Psoas muscle (tissue), 8 donors: ENCODE measurements at regions of chr2 and their contacts with region 1.

Region 1: DNA sequence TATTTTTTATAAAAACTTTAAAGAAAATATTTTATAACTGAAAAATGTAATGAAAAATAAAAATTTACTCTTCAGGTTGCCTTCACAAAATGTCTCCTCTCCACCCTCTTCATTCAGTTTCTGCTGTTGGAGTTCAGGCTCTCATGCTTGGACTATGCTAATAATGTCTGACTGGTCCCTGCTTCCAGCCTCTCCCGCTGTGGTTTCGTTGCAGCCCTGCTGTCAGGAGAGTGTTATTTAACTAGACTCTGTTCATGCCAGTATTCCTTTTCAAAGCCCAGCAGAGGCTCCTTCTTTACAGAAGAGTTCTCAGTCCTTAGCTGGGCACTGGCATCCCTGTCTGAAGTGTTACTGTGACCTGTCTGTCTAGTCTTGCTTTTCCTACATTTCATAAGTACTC is 40.4 kb downstream of the CLIP4 start:
- DNase-seq: no peak
- ATAC-seq: peak in 3 of 4 donors; percentile 39 to 46 (median 42)
- H3K4me3 ChIP-seq: no peak overlapping the region
- H3K27ac ChIP-seq: no peak overlapping the region
- H3K4me1 ChIP-seq: no peaks in the 10 kb centered on the region
- H3K27me3 ChIP-seq: no peaks in the 10 kb centered on the region
- CTCF ChIP-seq: no peak

Region 2: DNA sequence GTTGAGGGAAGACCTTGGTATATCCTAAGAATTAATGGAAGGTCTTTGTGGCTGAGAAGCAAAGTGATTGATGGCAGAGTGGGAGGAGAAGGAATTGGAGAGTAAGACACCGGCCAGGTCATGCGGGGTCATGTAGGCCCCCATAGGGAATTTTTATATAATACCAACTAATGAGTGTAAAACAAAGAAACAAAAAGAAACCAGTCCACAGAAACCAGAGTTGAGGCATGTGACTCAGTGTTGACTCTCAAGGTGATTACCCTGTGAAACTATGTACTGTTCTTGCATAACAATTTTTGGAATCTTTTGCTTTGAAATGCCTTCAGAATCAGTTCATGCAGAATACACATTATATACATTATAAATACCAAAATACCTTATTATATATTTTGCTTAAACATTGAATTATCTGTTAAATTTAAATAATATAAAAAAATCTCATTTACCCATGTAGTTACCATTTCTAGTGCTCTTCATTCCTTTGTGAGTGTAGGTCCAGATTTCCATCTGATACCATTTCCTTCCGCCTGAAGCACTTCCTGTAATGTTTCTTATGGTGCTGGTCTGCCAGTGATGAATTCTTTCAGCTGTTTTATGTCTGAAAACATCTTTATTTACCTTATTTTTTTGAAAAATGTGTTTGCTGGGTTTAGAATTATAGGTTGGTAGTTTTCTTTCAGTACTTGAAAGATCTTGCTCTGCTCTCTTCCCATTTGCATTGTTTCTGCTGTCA is 31.8 kb before region 1 on chr2:
- intact Hi-C with region 1: loop called in 1 of 2 experiments (anchors 5 kb)
- DNase-seq: no peak
- ATAC-seq: peak in 3 of 4 donors; percentile 64 to 71 (median 65)
- H3K4me3 ChIP-seq: no peak overlapping the region
- H3K27ac ChIP-seq: no peak overlapping the region
- H3K4me1 ChIP-seq: peaks cover 24% of the 10 kb centered on the region
- H3K27me3 ChIP-seq: no peaks in the 10 kb centered on the region
- CTCF ChIP-seq: no peak